Activated T-helper 1 cell treated with anti-CD3 and anti-CD28 coated beads, Interleukin-12 subunit alpha, Interleukin-12 subunit beta, Interleukin-2, Interleukin-4 antibody, amounts not matched to agents 30 ng/mL and 10 ng/mL and 1 ng/mL, durations not matched to agents 14 hours and 24 hours and 36 hours (primary cell): ENCODE measurements at regions of chr11 and their contacts with region 1.

Region 1: GRCh38 chr11:130069684-130070108 is at the start of gene APLP2:
- DNase-seq: peak; percentile 96
- H3K4me3 Mint-ChIP-seq: peak within 1 kb of the TSS; percentile 94
- H3K27ac Mint-ChIP-seq: peak within 1 kb of the TSS; percentile 89
- H3K4me1 Mint-ChIP-seq: peaks cover 17% of the 10 kb centered on the region
- H3K27me3 Mint-ChIP-seq: peaks cover 25% of the 10 kb centered on the region
- total RNA-seq, gene APLP2: 47.0 and 47.8 TPM in 2 replicates

Region 2: GRCh38 chr11:129279326-129280026 is 790.2 kb before region 1 on chr11:
- intact Hi-C with region 1: loop called (anchors 5 kb)
- DNase-seq: peak; percentile 74
- H3K4me3 Mint-ChIP-seq: peak overlapping the region; percentile 79
- H3K27ac Mint-ChIP-seq: peak overlapping the region; percentile 81
- H3K4me1 Mint-ChIP-seq: peaks cover 40% of the 10 kb centered on the region
- H3K27me3 Mint-ChIP-seq: peaks cover 29% of the 10 kb centered on the region

Region 3: GRCh38 chr11:129418039-129418438 is 651.7 kb before region 1 on chr11:
- intact Hi-C with region 1: no loop called
- DNase-seq: no peak
- H3K4me3 Mint-ChIP-seq: peak overlapping the region; percentile 40
- H3K27ac Mint-ChIP-seq: peak overlapping the region; percentile 81
- H3K4me1 Mint-ChIP-seq: peaks cover 29% of the 10 kb centered on the region
- H3K27me3 Mint-ChIP-seq: no peaks in the 10 kb centered on the region

Region 4: DNA sequence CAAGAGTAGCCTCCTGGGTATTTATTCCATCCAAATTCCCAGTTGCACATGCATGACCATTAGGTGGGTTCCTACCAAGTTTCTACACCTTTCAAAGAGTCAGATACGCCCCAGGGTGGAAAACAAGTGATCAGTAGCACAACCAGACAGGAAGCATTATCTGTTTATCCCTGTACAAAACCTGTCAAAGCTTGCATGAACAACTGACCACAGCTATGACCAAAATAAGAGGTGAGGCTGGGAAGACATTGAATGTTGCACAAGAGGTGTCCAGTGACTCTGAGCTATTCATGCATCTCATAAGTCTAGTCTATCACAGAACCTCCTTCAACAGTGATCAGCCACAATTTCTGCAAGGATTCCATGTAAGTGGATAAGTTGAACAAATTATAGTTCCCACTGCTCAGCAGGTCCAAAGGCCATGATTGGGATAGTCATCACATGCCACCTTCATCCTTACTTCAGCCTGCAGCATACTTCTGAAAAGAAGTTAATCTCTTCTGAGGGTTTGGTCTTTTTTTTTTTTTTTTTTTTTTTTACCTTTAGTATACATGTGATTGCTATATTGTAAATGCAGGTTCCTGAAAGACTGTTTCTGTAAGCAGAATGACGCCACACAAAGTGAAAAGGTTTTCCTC is 282.1 kb before region 1 on chr11:
- intact Hi-C with region 1: no loop called
- DNase-seq: no peak
- H3K4me3 Mint-ChIP-seq: no peak overlapping the region
- H3K27ac Mint-ChIP-seq: no peak overlapping the region
- H3K4me1 Mint-ChIP-seq: no peaks in the 10 kb centered on the region
- H3K27me3 Mint-ChIP-seq: peaks cover 8% of the 10 kb centered on the region

Region 5: DNA sequence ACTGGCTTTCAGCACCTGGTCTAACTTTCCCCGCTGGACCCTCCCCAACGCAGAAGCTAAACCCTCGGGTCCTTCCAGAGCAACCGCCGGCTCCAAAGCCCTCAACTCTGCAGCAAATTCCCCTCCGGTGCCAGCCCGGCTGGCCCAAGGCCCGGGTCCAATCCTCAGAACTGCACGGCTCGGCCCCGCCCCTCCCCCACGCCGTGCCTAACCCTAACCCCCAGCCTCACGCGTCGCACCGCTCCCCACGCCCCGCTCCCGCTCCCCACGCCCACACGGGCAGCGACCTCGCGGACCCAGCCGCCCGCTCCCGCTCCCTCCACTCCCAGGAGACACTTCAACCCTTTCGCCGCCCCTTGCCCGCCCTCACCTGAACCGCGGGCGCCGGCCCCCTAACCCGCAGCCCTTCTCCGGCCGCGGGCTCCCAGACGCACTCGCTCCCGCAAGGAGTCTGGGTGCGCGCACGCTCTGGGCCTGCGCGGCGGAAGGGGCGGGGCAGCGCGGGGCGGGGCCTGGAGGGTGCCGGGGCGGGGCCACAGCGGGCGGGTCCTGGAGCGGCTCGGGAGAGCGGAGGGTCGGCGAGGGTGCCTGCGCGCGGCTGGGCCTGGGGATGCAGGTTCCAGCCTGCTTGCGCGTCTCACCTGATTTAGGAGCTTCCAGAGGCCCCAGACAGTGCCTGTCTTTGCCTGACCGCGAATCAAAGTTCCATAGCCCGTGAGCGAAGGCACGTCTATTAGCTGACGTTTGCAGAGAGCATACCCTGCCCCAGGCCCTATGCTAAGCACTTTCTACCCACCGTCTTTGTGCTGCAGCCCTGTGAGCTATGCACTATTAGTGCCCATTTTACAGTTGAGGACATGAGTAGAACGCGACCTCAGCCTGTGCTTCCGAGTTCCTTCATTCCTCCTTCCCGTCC is 174.3 kb before region 1 on chr11 and contains the start of gene NFRKB:
- intact Hi-C with region 1: loop called (anchors 1 kb)
- DNase-seq: peak; percentile 84
- H3K4me3 Mint-ChIP-seq: peak within 1 kb of the TSS; percentile 92
- H3K27ac Mint-ChIP-seq: peak within 1 kb of the TSS; percentile 84
- H3K4me1 Mint-ChIP-seq: peaks cover 41% of the 10 kb centered on the region
- H3K27me3 Mint-ChIP-seq: peaks cover 5% of the 10 kb centered on the region
- total RNA-seq, gene NFRKB: 46.8 and 48.5 TPM in 2 replicates

Region 6: GRCh38 chr11:129917231-129917630 is 152.5 kb before region 1 on chr11:
- intact Hi-C with region 1: no loop called
- DNase-seq: no peak
- H3K4me3 Mint-ChIP-seq: no peak overlapping the region
- H3K27ac Mint-ChIP-seq: no peak overlapping the region
- H3K4me1 Mint-ChIP-seq: peaks cover 11% of the 10 kb centered on the region
- H3K27me3 Mint-ChIP-seq: no peaks in the 10 kb centered on the region

Region 7: GRCh38 chr11:130118636-130119387 is 49.1 kb after region 1 on chr11:
- intact Hi-C with region 1: loop called (anchors 2 kb)
- DNase-seq: no peak
- H3K4me3 Mint-ChIP-seq: peak overlapping the region; percentile 38
- H3K27ac Mint-ChIP-seq: no peak overlapping the region
- H3K4me1 Mint-ChIP-seq: peaks cover 30% of the 10 kb centered on the region
- H3K27me3 Mint-ChIP-seq: peaks cover 30% of the 10 kb centered on the region

Region 8: DNA sequence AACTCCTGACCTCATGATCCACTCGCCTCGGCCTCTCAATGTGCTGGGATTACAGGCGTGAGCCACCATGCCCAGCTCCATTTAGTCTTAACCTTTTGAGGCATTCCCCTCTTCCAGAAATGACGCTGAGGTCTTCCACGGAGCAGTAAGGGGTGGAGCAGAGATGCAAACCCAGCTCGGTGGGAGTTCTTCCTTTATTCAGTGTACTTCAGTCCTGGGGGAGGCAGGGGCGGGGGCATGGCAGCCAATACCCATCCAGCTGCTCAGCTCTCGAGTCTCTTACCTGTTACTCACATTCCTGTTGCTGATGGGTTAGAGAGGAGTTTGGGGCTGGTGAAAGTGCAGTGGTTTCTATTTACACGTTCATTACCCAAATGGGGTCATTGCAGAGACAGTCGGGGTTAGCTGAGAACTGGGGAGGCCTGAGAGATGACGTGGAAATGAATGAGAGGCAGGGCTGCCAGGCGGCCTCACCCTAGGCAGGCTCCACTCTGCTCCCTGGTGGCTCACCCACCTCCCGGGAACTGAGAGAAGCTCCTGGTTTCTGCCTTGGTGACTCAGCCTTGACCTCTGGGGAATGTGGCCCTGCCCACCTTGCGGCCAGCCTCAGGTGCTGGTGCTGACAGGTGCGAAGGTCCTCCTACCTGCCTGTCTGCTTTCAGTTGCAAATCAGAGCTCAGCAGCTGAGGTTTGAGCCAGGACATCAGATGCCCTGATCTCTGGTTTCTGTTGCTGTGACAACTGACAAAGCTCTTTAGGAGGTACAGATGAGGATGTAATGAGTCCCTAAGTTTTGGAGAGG is 76.5 kb after region 1 on chr11:
- intact Hi-C with region 1: no loop called
- DNase-seq: no peak
- H3K4me3 Mint-ChIP-seq: no peak overlapping the region
- H3K27ac Mint-ChIP-seq: no peak overlapping the region
- H3K4me1 Mint-ChIP-seq: peaks cover 10% of the 10 kb centered on the region
- H3K27me3 Mint-ChIP-seq: peaks cover under 1% of the 10 kb centered on the region

Region 9: GRCh38 chr11:130916238-130916855 is 846.7 kb after region 1 on chr11 and contains the start of gene SNX19:
- intact Hi-C with region 1: loop called (anchors 5 kb)
- DNase-seq: peak; percentile 90
- H3K4me3 Mint-ChIP-seq: peak within 1 kb of the TSS; percentile 87
- H3K27ac Mint-ChIP-seq: peak within 1 kb of the TSS; percentile 63
- H3K4me1 Mint-ChIP-seq: peaks cover 33% of the 10 kb centered on the region
- H3K27me3 Mint-ChIP-seq: peaks cover 8% of the 10 kb centered on the region
- total RNA-seq, gene SNX19: 58.5 and 60.7 TPM in 2 replicates